ENCODE measurements at regions of chr12 and their contacts with region 1.

Region 1: GRCh38 chr12:10140001-10140400 is 10.0 kb upstream of the CLEC7A start:
- DNase-seq: peak; percentile 72
- ATAC-seq: peak; percentile 64
- H3K4me3 Mint-ChIP-seq: no peak overlapping the region
- H3K27ac Mint-ChIP-seq: no peak overlapping the region
- H3K4me1 Mint-ChIP-seq: peaks cover 3% of the 10 kb centered on the region
- H3K27me3 Mint-ChIP-seq: peaks cover 16% of the 10 kb centered on the region

Region 2: GRCh38 chr12:9797722-9798619 is 342.0 kb before region 1 on chr12:
- CTCF ChIA-PET with region 1: interaction called, 16 read pairs
- POLR2A ChIA-PET with region 1: no interaction called
- DNase-seq: peak; percentile 87
- ATAC-seq: peak; percentile 83
- H3K4me3 Mint-ChIP-seq: no peak overlapping the region
- H3K27ac Mint-ChIP-seq: peak overlapping the region; percentile 64
- H3K4me1 Mint-ChIP-seq: peaks cover 46% of the 10 kb centered on the region
- H3K27me3 Mint-ChIP-seq: peaks cover 4% of the 10 kb centered on the region

Region 3: DNA sequence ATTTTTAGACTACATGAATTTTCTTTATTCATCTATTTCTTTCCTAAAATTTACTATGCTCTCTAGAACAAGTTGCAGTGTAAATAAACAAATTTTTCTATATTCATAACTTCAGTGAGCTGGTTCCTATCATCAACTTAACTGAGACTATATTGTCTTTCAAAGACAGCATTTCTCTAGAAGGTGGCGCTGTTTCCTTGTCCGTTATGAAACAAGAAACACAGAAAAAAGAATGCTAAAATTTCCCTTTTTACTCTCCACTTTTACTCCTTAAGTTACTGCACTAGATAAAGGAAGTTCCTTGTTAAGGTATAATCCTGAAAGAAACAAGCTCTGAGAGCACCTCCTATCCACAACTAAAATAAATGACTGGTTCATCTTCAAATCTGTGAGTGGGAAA is 199.6 kb before region 1 on chr12:
- CTCF ChIA-PET with region 1: interaction called, 23 read pairs
- POLR2A ChIA-PET with region 1: no interaction called
- DNase-seq: peak; percentile 48
- ATAC-seq: no peak
- H3K4me3 Mint-ChIP-seq: no peak overlapping the region
- H3K27ac Mint-ChIP-seq: no peak overlapping the region
- H3K4me1 Mint-ChIP-seq: peaks cover 19% of the 10 kb centered on the region
- H3K27me3 Mint-ChIP-seq: peaks cover 13% of the 10 kb centered on the region

Region 4: GRCh38 chr12:10012630-10013330 is 127.2 kb before region 1 on chr12:
- CTCF ChIA-PET with region 1: interaction called, 13 read pairs
- POLR2A ChIA-PET with region 1: no interaction called
- DNase-seq: no peak
- ATAC-seq: no peak
- H3K4me3 Mint-ChIP-seq: no peak overlapping the region
- H3K27ac Mint-ChIP-seq: no peak overlapping the region
- H3K4me1 Mint-ChIP-seq: no peaks in the 10 kb centered on the region
- H3K27me3 Mint-ChIP-seq: peaks cover 36% of the 10 kb centered on the region

Region 5: DNA sequence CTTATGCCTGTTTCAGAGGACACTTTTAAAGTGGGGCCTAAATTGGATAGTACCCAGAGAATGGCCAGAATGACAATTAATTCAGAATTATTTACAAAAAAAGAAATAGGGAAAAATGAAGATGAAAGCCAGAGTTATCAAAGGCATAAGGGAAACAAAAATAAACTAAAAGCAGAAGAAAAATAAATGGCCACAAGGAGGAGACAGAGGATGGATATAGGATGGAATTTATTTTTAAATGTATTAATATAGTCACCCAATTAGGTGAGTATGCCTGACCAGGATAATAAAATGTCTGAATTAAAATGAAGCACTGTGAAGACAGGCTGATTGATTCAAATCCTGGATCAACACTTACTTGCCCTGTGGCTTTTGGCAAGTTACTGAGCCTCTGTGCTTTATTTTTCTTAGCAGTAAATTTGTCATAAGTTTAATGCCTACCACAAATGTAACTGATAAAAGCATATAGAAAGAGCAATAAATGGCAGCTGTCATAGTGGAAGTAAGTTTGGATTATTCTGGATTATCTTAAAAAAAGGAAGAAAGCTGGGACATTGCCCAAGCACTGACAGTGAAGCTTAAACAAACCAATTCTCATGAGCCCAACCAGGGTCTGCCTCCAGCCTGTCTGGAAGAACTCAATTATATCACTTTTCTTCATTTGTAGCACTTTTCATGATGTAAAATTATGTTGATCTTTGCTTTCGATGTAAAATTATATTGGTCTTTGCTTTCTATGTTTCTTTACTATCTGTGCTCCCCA is 106.0 kb before region 1 on chr12:
- CTCF ChIA-PET with region 1: interaction called, 10 read pairs
- POLR2A ChIA-PET with region 1: no interaction called
- DNase-seq: no peak
- ATAC-seq: no peak
- H3K4me3 Mint-ChIP-seq: no peak overlapping the region
- H3K27ac Mint-ChIP-seq: no peak overlapping the region
- H3K4me1 Mint-ChIP-seq: no peaks in the 10 kb centered on the region
- H3K27me3 Mint-ChIP-seq: peaks cover 22% of the 10 kb centered on the region

Region 6: DNA sequence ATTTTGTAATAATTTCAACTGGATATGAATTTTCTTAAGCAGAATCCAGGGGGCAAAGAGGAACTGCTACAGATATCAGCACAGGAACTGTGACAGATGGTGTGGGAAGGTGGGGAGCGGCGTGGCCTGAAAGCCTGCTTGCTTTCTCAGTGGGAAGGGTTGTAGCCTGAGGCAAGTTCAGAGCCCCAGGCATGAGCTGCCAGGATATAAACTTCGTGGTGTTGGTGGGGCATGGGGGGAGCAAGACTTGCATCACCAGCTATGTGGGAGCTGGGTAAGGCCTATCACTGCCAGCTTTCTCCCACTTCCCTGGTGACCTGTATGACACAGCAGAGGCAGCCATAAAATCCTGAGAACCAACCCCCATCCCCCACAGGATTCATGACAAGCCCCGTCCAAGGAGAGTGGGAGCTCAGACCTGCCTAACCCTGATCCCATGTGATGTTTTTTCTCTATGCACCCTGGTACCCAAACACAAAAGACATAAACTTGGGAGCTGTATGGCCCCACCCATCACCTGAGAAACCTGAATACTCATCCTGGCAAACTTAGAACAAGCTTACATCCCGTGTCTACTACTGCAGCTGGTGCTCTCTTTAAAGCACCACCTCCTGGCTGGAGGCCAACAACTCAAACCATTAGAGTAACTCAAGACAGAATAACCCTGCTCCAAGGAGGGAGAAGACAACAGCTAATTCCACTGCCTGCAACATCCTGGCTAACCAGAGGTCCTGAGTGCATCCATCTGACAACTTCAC is 57.7 kb before region 1 on chr12:
- CTCF ChIA-PET with region 1: no interaction called
- POLR2A ChIA-PET with region 1: no interaction called
- DNase-seq: no peak
- ATAC-seq: no peak
- H3K4me3 Mint-ChIP-seq: no peak overlapping the region
- H3K27ac Mint-ChIP-seq: no peak overlapping the region
- H3K4me1 Mint-ChIP-seq: no peaks in the 10 kb centered on the region
- H3K27me3 Mint-ChIP-seq: peaks cover 8% of the 10 kb centered on the region

Region 7: GRCh38 chr12:10153271-10154144 is 13.5 kb after region 1 on chr12:
- CTCF ChIA-PET with region 1: interaction called, 19 read pairs
- POLR2A ChIA-PET with region 1: no interaction called
- DNase-seq: peak; percentile 73
- ATAC-seq: peak; percentile 83
- H3K4me3 Mint-ChIP-seq: peak overlapping the region; percentile 88
- H3K27ac Mint-ChIP-seq: peak overlapping the region; percentile 75
- H3K4me1 Mint-ChIP-seq: peaks cover 12% of the 10 kb centered on the region
- H3K27me3 Mint-ChIP-seq: peaks cover 12% of the 10 kb centered on the region

Measured in activated CD8-positive, alpha-beta T cell treated with anti-CD3 and anti-CD28 coated beads, Interleukin-2, amount 10 ng/mL, durations not matched to agents 7 days and 5 days (primary cell).